ENCODE measurements at regions of chr19 and their contacts with region 1.

Region 1: DNA sequence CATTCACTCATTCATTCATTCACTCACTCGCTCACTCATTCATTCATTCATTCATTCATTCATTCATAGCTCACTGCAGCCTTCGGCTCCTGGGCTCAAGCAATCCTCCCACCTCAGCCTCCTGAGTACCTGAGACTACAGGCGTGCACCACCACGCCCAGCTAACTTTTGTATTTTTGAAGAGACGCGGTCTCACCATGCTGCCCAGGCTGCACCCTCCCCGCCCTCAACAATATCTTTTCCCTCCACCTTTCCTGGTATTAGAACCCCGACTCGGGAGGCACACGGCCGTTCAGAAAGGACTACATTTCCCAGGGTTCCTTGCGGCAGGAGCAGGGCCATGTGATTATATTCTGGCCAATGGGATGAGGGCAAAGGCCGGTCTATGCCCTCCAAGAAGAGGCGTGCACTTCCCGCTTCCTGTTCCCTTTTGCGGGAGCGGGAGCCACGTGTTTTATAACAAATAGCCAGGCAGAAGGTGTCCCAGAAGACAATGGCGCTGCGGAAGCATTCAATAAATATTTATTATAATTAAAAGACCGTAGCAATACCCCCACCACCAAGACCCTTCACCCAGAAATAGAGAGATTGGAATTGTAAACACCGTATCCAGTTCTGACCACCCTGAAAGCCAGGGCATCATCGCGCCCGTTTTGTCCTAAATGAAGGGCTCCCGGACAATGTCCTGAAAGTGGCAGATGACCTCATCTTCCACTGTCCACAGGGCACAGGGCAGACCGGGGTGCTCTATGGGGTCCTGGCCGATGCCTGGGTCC is 15.9 kb downstream of the TICAM1 start:
- DNase-seq: peak; percentile 84 to 98 (median 92)

Region 2: DNA sequence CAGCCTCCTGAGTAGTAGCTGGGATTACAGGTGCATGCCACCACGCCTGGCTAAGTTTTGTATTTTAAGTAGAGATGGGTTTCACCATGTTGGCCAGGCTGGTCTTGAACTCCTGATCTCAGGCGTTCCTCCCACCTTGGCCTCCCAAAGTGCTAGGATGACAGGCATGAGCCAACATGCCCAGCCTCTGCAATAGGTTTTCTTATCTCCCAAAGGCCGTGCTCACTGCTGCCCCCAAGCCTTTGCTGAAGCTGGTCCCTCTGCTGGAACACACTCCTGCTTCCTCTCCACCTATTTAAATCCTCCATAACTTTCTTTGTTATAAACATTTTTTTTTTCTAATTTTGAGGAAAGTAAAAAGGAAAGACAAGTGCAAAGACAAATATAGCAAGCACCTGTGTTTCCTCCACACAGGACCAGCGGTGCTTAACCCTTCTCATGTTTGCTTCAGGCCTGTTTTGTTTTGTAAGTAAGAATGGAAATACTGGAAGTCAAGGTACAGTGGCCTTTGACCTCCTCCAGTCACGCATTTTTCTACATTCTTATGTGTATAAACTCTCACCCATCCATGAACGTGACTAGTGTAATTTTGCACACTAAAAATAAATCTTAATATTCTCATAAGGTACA is 190.8 kb before region 1 on chr19:
- intact Hi-C with region 1: no loop called
- DNase-seq: peak in 3 of 10 donors; percentile 48 to 89 (median 88)

Region 3: GRCh38 chr19:4851551-4852290 is 36.1 kb after region 1 on chr19:
- intact Hi-C with region 1: loop called (anchors 1 kb)
- DNase-seq: peak; percentile 29 to 95 (median 79)

Region 4: GRCh38 chr19:4896372-4896771 is 80.8 kb after region 1 on chr19:
- intact Hi-C with region 1: no loop called
- DNase-seq: no peak